Common myeloid progenitor, CD34-positive (primary cell): ENCODE measurements at regions of chr3 and their contacts with region 1.

Region 1: DNA sequence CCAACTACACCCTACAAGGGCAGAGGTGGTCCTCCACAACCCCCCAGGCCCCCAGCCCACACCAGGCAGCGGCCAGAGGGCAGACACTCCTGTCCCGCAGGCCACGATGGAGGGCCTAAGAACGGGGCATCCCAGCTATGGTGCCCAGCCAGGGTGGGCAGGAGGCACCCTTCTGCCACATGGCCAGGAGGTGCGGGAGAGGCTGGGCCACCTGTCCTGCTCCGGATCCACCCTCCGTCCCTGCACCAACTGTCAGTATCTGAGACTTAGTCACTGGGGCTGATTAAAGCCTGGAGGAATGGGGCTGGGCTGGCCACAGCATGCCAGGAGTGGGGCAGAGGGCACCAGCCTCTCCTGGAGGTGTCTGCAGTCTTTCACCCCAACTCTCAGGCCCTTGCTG is 37.9 kb downstream of the TNK2 start:
- DNase-seq: no peak
- H3K4me3 ChIP-seq: no peak overlapping the region
- H3K27ac ChIP-seq: no peak overlapping the region
- H3K4me1 ChIP-seq: no peaks in the 10 kb centered on the region
- H3K27me3 ChIP-seq: no peaks in the 10 kb centered on the region

Region 2: GRCh38 chr3:195886181-195887141 is 16.0 kb after region 1 on chr3:
- CTCF ChIA-PET with region 1: interaction called, 17 read pairs
- POLR2A ChIA-PET with region 1: no interaction called
- DNase-seq: no peak
- H3K4me3 ChIP-seq: no peak overlapping the region
- H3K27ac ChIP-seq: no peak overlapping the region
- H3K4me1 ChIP-seq: peaks cover 0 to 3% (median 0%) of the 10 kb centered on the region in 4 experiments
- H3K27me3 ChIP-seq: no peaks in the 10 kb centered on the region